Right ventricle myocardium superior (tissue), 1 donor: ENCODE measurements at regions of chr5 and their contacts with region 1.

Region 1: DNA sequence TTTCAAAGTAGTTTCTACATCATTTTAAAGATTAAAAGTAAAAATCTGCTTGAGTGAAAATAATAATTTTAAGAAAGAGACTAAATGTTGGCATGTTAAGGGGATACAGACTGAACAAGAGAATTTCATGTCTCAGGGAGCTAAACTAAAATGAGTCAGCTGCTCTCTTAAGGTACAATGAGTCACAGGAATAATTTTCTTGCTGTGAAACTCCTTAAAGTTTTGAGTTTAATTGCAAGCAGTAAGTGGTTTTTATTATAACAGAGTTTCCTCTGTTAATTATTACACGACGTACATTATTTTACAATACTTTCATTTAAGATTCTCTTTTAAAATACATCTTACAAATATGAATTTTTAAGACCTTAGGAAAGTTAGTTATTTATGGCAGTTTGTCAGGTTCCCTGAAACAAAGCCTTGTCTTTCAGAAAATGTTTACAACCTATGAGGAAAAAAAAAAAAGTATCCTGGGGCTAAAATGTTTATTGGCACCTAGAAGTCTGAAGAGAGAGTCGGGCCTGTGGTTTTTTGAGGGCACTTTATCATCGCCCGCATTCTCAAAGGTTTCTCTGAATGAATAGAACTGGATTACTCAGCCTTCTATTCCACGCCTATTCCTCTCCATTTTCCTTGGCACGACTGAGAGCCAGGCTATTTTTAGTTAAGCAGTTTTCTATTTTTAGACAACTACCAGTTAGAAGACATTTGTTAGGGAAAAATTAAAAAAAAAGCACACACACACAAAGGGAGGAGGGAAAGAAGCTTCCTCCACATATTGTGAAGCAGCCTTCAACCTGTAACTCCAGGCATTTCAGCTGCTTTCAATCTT is 97.4 kb downstream of the MEF2C start:
- DNase-seq: no peak
- ATAC-seq: peak; percentile 93

Region 2: GRCh38 chr5:88377705-88378656 is 407.6 kb before region 1 on chr5:
- intact Hi-C with region 1: no loop called
- DNase-seq: no peak
- ATAC-seq: no peak

Region 3: DNA sequence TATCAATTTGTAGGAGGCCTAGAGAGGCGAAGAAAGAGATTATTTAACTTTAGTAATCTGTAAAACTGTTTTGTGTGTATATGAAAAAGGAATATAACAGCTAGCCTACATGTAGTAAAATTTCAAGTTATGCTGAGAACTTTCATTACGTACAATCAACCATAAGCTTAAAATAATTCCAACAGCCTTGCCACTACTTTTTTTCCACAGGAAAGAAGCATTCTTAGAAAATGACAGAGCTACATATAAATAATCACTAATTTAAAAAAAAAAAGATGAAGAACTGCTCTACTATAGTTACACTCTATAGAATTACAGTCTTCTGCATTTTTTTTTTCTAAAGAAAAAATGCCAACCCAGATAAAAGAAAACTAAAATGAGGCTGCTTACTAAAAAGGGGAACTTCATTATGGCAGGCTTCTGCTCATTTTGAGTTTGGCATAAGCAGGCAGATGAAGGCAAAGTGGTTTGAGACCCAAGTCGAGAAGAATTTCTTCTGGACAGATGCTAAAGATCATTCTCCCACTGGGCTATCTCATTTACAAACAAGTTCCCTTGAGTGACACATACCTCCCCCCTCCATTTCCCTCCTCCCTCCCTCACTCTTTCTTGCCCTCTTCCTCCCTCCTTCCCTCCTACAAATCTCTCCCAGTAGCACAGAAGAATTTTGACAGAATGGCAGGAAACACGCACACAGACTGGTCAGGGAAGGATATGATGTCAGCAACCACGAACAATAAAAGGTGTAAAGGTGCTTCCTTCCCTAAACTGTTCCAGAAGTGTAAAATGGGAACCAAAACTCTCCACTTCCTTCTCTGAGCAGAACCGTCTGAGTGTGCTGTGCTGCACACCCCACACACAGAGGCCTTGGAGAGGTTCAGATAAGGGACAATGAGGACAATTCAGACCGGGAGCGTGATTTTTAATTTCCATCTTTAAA is 41.3 kb after region 1 on chr5:
- intact Hi-C with region 1: loop called (anchors 5 kb)
- DNase-seq: peak; percentile 48
- ATAC-seq: peak; percentile 66